ENCODE measurements at regions of chr2 and their contacts with region 1.

Region 1: GRCh38 chr2:226137201-226137811 is 662.3 kb downstream of the IRS1 start:
- DNase-seq: peak; percentile 21 to 72
- H3K4me3 ChIP-seq: no peak overlapping the region
- H3K27ac ChIP-seq: peak overlapping the region; percentile 58
- H3K4me1 ChIP-seq: peaks cover 23% of the 10 kb centered on the region
- H3K27me3 ChIP-seq: no peaks in the 10 kb centered on the region
- CTCF ChIP-seq: no peak

Region 2: DNA sequence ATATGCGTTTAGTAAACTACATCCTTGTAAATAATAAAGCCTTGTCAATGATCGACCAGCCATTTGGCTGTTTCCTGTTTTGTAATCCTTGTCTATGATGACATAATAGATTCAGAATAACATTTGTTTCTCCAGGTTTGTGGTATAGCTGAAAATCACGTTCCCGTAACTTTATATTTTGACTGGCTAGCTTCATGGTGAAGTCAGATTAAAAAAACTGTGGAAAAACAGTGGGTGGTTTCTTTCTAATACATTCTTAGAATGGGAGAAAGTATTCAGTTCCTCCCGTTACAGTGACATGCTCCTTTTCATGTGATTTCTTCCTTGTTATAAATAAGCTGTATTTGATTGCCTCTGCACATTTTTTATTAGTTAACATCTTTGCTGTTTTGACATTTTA is 370.9 kb before region 1 on chr2:
- CTCF ChIA-PET with region 1: no interaction called
- POLR2A ChIA-PET with region 1: no interaction called
- intact Hi-C with region 1: no loop called
- DNase-seq: no peak
- H3K4me3 ChIP-seq: no peak overlapping the region
- H3K27ac ChIP-seq: no peak overlapping the region
- H3K4me1 ChIP-seq: no peaks in the 10 kb centered on the region
- H3K27me3 ChIP-seq: no peaks in the 10 kb centered on the region
- CTCF ChIP-seq: no peak

Region 3: DNA sequence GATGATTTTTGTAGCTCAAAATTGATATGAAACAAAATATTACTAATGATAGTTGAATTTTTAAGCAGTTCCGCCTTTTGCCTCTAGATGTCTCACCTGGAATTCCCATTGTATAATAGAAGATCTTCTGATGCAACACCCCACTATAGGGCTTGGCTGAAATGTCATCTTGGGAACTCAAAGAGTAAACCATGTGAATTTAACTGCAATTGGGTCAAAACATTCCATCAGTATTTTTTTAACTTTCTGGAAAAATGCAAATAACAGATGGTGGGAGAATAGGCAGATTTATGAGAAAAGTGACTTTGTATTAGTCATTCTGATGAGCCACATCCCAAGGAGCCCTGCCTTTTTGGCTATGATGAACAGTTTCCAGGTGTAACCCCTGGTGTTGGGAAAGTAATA is 247.9 kb before region 1 on chr2:
- CTCF ChIA-PET with region 1: no interaction called
- POLR2A ChIA-PET with region 1: no interaction called
- intact Hi-C with region 1: no loop called
- DNase-seq: peak; percentile 2 to 58
- H3K4me3 ChIP-seq: no peak overlapping the region
- H3K27ac ChIP-seq: peak overlapping the region; percentile 48
- H3K4me1 ChIP-seq: peaks cover 8% of the 10 kb centered on the region; the same call in 1 of the 2 replicates
- H3K27me3 ChIP-seq: no peaks in the 10 kb centered on the region
- CTCF ChIP-seq: peak; percentile 88

Region 4: GRCh38 chr2:226118471-226119430 is 18.6 kb before region 1 on chr2:
- CTCF ChIA-PET with region 1: no interaction called
- POLR2A ChIA-PET with region 1: interaction called, 9 read pairs
- intact Hi-C with region 1: loop called (anchors 2 kb)
- DNase-seq: peak; percentile 33 to 92
- H3K4me3 ChIP-seq: peak overlapping the region; percentile 27; the same call in 1 of the 2 replicates
- H3K27ac ChIP-seq: peak overlapping the region; percentile 93
- H3K4me1 ChIP-seq: peaks cover 64% of the 10 kb centered on the region
- H3K27me3 ChIP-seq: no peaks in the 10 kb centered on the region
- CTCF ChIP-seq: no peak

Region 5: DNA sequence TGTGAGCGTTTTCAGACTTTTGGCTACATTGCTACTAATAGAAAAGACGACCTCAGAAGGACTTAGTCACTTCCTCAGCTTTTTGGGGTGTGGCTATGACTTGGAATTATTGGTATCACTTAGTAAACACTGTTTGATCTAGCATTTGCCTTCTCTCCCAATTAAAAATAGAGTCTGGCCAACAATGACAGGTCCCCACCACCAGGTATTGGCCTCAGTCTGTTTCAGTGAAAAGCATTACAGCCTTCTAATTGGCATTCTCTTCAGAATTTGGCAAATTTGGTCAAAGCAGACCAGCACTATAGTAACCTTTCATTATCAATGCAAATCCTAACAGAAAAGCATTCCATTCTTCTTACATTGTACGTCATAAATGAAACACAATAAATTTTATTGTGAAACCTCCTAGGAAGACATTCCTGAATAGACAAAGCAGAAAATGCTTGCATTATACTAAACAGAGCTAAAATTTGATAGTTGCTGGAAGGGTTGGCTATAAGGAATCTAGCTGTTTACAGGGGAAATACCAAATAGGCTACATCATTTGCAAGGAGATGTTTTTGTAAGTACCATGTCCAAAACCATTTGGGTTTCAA is 48.4 kb after region 1 on chr2:
- CTCF ChIA-PET with region 1: no interaction called
- POLR2A ChIA-PET with region 1: no interaction called
- intact Hi-C with region 1: loop called (anchors 2 kb)
- DNase-seq: peak; percentile 26 to 70
- H3K4me3 ChIP-seq: no peak overlapping the region
- H3K27ac ChIP-seq: peak overlapping the region; percentile 77
- H3K4me1 ChIP-seq: peaks cover 19% of the 10 kb centered on the region
- H3K27me3 ChIP-seq: no peaks in the 10 kb centered on the region
- CTCF ChIP-seq: no peak

Region 6: DNA sequence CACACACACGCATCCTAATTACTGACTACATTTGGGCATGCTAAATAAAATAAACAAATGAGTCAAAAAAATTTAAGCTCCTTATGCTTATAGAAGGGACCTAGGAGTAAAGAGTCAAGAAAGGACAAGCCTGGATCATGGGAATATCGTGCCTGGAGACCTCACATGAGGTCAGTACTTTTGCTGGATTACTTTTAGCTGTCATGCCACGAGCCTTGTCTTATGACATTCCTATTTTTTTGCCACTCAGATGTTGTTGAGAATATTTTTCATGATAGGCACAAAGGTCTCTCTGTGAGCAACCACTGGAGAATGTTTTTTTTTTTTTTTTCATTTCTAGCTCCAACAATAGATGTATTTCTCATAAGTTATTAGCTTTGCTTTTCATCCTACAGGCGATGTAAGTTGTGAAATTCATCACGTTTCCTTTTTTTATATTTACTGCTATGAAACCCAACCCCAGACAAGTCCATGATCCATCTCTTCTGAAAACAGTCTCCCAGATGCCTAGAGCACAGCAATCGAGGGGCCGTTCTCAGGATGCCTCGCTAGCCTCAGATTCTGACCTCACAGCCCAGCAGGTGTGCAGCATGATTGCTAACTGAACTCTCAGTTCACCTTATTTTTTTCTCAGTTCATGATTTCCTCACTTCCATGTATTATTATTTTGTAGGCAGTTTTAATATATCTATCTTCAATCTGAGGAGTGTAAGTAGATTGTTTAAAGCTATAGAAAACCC is 197.8 kb after region 1 on chr2:
- CTCF ChIA-PET with region 1: no interaction called
- POLR2A ChIA-PET with region 1: no interaction called
- intact Hi-C with region 1: loop called (anchors 5 kb)
- DNase-seq: peak in 1 of 2 experiments; percentile 29
- H3K4me3 ChIP-seq: no peak overlapping the region
- H3K27ac ChIP-seq: no peak overlapping the region
- H3K4me1 ChIP-seq: peaks cover 16% of the 10 kb centered on the region
- H3K27me3 ChIP-seq: no peaks in the 10 kb centered on the region
- CTCF ChIP-seq: no peak

Region 7: GRCh38 chr2:226411727-226412360 is 274.5 kb after region 1 on chr2:
- CTCF ChIA-PET with region 1: no interaction called
- POLR2A ChIA-PET with region 1: no interaction called
- intact Hi-C with region 1: loop called (anchors 5 kb)
- DNase-seq: peak; percentile 57 to 95
- H3K4me3 ChIP-seq: no peak overlapping the region
- H3K27ac ChIP-seq: peak overlapping the region; percentile 78
- H3K4me1 ChIP-seq: peaks cover 14% of the 10 kb centered on the region
- H3K27me3 ChIP-seq: no peaks in the 10 kb centered on the region
- CTCF ChIP-seq: no peak

Region 8: GRCh38 chr2:226431288-226431948 is 294.1 kb after region 1 on chr2:
- CTCF ChIA-PET with region 1: no interaction called
- POLR2A ChIA-PET with region 1: no interaction called
- intact Hi-C with region 1: loop called (anchors 2 kb)
- DNase-seq: peak in 1 of 2 experiments; percentile 61
- H3K4me3 ChIP-seq: no peak overlapping the region
- H3K27ac ChIP-seq: no peak overlapping the region
- H3K4me1 ChIP-seq: peaks cover 20% of the 10 kb centered on the region
- H3K27me3 ChIP-seq: no peaks in the 10 kb centered on the region
- CTCF ChIP-seq: no peak

Measured in PC-9 (cell line).